H1 (cell line): ENCODE measurements at regions of chr11 and their contacts with region 1.

Region 1: GRCh38 chr11:132312701-132313111 is 942.3 kb downstream of the NTM start:
- DNase-seq: peak in 1 of 2 experiments; percentile 23
- H3K4me3 ChIP-seq: no peak overlapping the region
- H3K27ac ChIP-seq: no peak overlapping the region
- H3K4me1 ChIP-seq: no peaks in the 10 kb centered on the region; a peak in 1 of 7 replicates
- H3K27me3 ChIP-seq: no peaks in the 10 kb centered on the region
- CTCF ChIP-seq: peak; percentile 72 to 92 (median 82)
- EP300 ChIP-seq: no peak
- POLR2A ChIP-seq: no peak
- RAD21 ChIP-seq: peak; percentile 64 to 76

Region 2: DNA sequence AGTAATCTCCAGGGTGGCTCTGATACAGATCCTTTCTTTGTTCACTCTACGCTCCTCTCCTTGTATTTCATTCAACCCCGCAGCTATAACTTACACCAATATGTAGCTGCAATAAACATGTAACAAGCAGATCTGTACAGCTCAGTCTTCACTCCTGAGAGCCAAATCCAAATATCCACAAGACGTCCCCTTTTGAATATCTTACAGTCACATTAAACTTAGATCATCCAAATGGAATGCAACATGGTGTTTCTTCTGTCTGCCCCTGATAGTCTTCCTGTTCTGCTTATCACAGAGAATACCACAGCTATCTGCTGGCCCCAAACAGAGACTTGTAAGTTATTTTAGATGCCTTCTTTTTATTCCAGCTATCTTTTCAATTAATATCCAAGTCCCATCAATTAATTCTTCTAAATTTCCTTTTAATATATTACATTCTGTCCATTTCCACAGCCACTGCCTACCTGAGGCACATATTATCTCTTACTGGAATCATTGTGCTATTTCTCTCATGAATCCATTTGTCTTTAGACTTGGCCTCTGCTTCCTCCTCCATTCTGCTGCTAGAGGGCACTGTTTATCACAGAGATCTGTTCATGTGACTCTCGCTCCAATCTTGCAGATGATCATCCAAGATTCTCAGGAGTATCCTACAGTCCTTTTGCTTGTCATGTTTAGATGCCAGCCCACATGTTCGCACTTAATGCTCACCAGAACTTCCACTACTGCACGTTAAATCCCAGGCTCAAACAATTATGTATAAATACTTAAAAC is 33.7 kb before region 1 on chr11:
- CTCF ChIA-PET with region 1: interaction called, 17 read pairs
- POLR2A ChIA-PET with region 1: no interaction called
- DNase-seq: no peak
- H3K4me3 ChIP-seq: no peak overlapping the region
- H3K27ac ChIP-seq: no peak overlapping the region
- H3K4me1 ChIP-seq: peaks cover 2 to 8% (median 3%) of the 10 kb centered on the region in 4 experiments; a peak in 5 of 7 replicates
- H3K27me3 ChIP-seq: no peaks in the 10 kb centered on the region; a peak in 1 of 7 replicates
- CTCF ChIP-seq: peak in 2 of 3 experiments; percentile 61 to 74; a peak in 3 of 4 replicates
- EP300 ChIP-seq: no peak
- POLR2A ChIP-seq: no peak
- RAD21 ChIP-seq: peak; percentile 69 to 79

Region 3: GRCh38 chr11:132300283-132300682 is 12.4 kb before region 1 on chr11:
- CTCF ChIA-PET with region 1: interaction called, 146 read pairs
- POLR2A ChIA-PET with region 1: no interaction called
- DNase-seq: no peak
- H3K4me3 ChIP-seq: no peak overlapping the region
- H3K27ac ChIP-seq: no peak overlapping the region
- H3K4me1 ChIP-seq: no peaks in the 10 kb centered on the region
- H3K27me3 ChIP-seq: no peaks in the 10 kb centered on the region
- CTCF ChIP-seq: peak; percentile 54 to 76 (median 64)
- EP300 ChIP-seq: no peak
- POLR2A ChIP-seq: no peak
- RAD21 ChIP-seq: peak; percentile 36 to 51; a peak in 2 of 4 replicates

Region 4: GRCh38 chr11:132342408-132342807 is 29.7 kb after region 1 on chr11:
- CTCF ChIA-PET with region 1: interaction called, 22 read pairs
- POLR2A ChIA-PET with region 1: no interaction called
- DNase-seq: no peak
- H3K4me3 ChIP-seq: no peak overlapping the region
- H3K27ac ChIP-seq: no peak overlapping the region
- H3K4me1 ChIP-seq: peaks cover 0 to 4% (median 2%) of the 10 kb centered on the region in 4 experiments; a peak in 2 of 7 replicates
- H3K27me3 ChIP-seq: no peaks in the 10 kb centered on the region
- CTCF ChIP-seq: no peak
- EP300 ChIP-seq: no peak
- POLR2A ChIP-seq: no peak
- RAD21 ChIP-seq: no peak

Region 5: GRCh38 chr11:132402071-132402684 is 89.5 kb after region 1 on chr11:
- CTCF ChIA-PET with region 1: interaction called, 15 read pairs
- POLR2A ChIA-PET with region 1: no interaction called
- DNase-seq: peak; percentile 46 to 64
- H3K4me3 ChIP-seq: no peak overlapping the region
- H3K27ac ChIP-seq: no peak overlapping the region
- H3K4me1 ChIP-seq: peaks cover 0 to 12% (median 4%) of the 10 kb centered on the region in 4 experiments; a peak in 6 of 7 replicates
- H3K27me3 ChIP-seq: peaks cover 0 to 4% (median 0%) of the 10 kb centered on the region in 4 experiments; a peak in 4 of 7 replicates
- CTCF ChIP-seq: peak; percentile 69 to 86 (median 85)
- EP300 ChIP-seq: no peak
- POLR2A ChIP-seq: no peak
- RAD21 ChIP-seq: peak; percentile 89 to 94